HEK293 (cell line): ENCODE measurements at regions of chr6 and their contacts with region 1.

Region 1: GRCh38 chr6:37381579-37381978 is 27.8 kb downstream of the RNF8 start:
- H3K4me3 ChIP-seq: no peak overlapping the region
- H3K27ac ChIP-seq: no peak overlapping the region
- H3K4me1 ChIP-seq: no peaks in the 10 kb centered on the region
- CTCF ChIP-seq: peak; percentile 40; the same call in 1 of the 2 replicates

Region 2: GRCh38 chr6:37365762-37366161 is 15.8 kb before region 1 on chr6:
- CTCF ChIA-PET with region 1: interaction called, 22 read pairs
- POLR2A ChIA-PET with region 1: no interaction called
- H3K4me3 ChIP-seq: no peak overlapping the region
- H3K27ac ChIP-seq: no peak overlapping the region
- H3K4me1 ChIP-seq: peaks cover 12% of the 10 kb centered on the region
- CTCF ChIP-seq: peak; percentile 60; the same call in 1 of the 2 replicates

Region 3: DNA sequence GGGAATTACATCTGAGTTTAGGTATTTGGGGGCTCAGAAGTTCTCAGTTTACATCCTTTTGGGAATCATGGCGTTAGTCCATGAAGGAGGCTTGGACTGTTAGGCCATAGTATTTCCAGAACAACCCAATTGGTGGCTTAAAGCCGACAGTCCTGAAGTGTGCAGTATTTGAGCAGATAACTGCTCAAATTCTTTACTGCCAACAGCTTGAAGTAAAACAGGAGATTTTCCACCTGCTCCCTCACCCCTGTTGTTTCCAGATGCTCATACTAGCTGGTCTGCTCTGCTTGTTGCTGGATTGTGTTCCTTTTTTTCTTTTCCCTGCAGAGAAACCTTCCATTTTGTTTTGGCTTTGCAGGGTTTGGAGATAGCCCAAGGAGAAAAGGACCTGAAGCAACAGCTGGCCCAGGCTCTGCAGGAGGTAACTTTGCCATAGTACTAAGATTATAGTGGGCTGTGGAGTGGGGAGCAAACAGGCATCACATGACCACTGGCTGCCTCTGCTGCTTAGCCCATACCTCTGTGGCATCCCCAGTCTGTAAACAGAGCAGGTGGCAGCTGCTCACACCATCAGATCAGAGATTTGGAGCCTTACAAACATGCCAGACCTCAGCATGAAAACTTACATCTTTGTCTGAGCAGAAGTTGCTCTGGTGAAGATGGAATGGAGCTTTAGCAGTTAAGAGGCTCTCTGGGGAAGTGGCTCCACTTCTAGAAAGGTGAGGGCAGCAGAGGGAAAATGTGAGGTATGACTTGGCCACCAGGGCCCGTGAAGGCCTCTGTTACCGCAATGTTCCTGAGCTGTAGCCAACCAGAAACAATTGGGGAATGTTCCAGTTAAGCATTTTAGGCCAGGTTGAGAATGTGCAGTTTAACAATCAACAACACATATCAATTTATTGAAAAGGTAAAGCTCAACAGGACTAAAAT is 10.2 kb before region 1 on chr6:
- CTCF ChIA-PET with region 1: interaction called, 22 read pairs
- POLR2A ChIA-PET with region 1: no interaction called
- H3K4me3 ChIP-seq: no peak overlapping the region
- H3K27ac ChIP-seq: no peak overlapping the region
- H3K4me1 ChIP-seq: no peaks in the 10 kb centered on the region
- CTCF ChIP-seq: no peak

Region 4: GRCh38 chr6:37396476-37397180 is 15.0 kb after region 1 on chr6:
- CTCF ChIA-PET with region 1: interaction called, 13 read pairs
- POLR2A ChIA-PET with region 1: no interaction called
- H3K4me3 ChIP-seq: no peak overlapping the region
- H3K27ac ChIP-seq: no peak overlapping the region
- H3K4me1 ChIP-seq: no peaks in the 10 kb centered on the region
- CTCF ChIP-seq: no peak